Breast epithelium (tissue), 4 donors: ENCODE measurements at regions of chr12 and their contacts with region 1.

Region 1: DNA sequence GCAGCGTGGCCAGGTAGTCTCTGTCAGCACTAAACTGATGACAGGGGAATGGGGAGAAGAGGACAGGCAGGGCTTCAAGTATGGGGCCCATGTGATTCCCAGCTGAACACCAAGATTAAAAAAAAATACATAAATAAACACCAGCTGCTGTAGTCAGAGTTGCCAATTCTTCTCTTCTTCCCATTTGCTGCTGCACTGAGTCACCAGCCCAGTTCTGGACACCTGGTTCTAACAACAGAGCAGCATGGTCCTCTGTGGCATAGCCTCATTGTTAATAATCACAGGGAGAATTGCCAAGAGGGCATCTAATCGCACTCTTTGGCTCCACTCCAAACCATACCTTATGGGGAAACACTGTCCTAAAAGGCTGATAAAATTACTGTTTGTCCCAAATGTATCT is 15.1 kb downstream of the PPM1H start:
- DNase-seq: no peak
- H3K4me3 ChIP-seq: no peak overlapping the region
- H3K27ac ChIP-seq: no peak overlapping the region
- H3K4me1 ChIP-seq: no peaks in the 10 kb centered on the region
- H3K27me3 ChIP-seq: no peaks in the 10 kb centered on the region
- CTCF ChIP-seq: no peak
- POLR2A ChIP-seq: no peak

Region 2: GRCh38 chr12:61934564-61934963 is 985.3 kb before region 1 on chr12:
- intact Hi-C with region 1: no loop called
- DNase-seq: no peak
- H3K4me3 ChIP-seq: no peak overlapping the region
- H3K27ac ChIP-seq: no peak overlapping the region
- H3K4me1 ChIP-seq: no peaks in the 10 kb centered on the region
- H3K27me3 ChIP-seq: no peaks in the 10 kb centered on the region
- CTCF ChIP-seq: no peak
- POLR2A ChIP-seq: no peak

Region 3: DNA sequence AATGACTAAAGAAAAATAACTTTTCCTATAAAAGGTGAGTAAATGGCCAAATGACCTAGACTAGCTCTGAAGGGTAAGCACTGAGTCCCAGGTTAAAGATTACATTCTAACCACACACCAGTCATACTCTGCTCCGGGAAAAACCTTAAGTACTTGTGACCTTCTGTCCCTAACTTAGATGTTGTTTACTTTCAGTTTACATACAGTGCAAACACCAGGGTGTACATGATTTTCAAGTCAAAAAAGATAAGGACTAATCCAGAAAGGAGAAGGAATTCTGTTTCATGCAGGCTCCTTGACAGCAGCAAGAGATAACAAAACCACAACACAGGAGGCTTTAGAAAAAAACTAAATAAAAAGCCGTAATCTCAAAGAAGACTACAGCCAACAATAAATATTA is 159.1 kb before region 1 on chr12:
- intact Hi-C with region 1: no loop called
- DNase-seq: no peak
- H3K4me3 ChIP-seq: no peak overlapping the region
- H3K27ac ChIP-seq: no peak overlapping the region
- H3K4me1 ChIP-seq: no peaks in the 10 kb centered on the region
- H3K27me3 ChIP-seq: no peaks in the 10 kb centered on the region
- CTCF ChIP-seq: no peak
- POLR2A ChIP-seq: no peak

Region 4: GRCh38 chr12:63021116-63021515 is 101.3 kb after region 1 on chr12:
- intact Hi-C with region 1: loop called (anchors 10 kb)
- DNase-seq: no peak
- H3K4me3 ChIP-seq: no peak overlapping the region
- H3K27ac ChIP-seq: no peak overlapping the region
- H3K4me1 ChIP-seq: no peaks in the 10 kb centered on the region
- H3K27me3 ChIP-seq: no peaks in the 10 kb centered on the region
- CTCF ChIP-seq: no peak
- POLR2A ChIP-seq: no peak